WTC11 (cell line): ENCODE measurements at regions of chr18 and their contacts with region 1.

Region 1: DNA sequence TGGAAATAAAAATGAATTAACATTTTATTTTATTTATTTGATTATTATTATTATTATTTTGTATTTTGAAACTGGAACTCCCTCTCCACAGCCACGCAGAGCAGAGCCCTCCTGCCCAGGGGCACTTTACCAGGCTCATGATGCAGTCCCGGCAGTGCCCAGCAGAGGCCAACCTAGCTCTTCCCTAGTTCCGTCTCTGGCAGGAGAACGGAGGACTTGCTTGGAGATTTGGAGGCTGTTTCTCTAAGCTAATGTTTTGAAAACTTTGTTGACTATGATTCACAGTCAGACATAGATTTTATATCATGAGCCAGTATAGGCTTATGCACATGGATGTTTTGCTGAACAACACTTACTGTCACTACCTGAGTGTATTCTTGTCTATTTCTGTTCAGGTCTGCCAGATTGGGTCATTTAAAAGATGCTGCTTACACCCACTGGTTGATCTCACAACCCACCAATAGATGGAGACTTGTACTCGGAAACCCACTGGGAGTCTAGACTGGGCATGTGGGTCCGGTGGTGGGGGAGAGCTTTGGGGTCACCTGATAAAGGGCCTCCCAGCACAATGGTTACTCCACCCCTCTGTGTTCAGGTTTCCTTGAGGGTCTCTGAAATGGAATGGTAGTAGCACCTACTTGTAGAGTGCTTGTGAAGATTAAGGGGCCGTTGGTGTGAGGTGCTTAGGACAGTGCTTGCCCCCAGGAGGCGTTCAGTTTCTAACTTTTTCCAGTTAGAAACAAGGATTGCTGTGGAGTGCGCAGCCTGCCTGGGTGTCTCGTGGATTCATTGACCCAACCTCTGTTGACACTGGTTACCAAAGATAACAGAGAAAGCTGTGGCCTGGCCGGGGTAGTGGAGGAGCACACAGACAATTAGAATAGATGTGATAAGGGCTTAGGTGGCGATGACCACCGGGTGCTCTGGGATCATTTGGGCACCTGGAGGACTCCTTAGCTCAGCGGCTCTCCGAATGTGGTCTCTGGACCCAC is 177.3 kb downstream of the HAUS1 start:
- DNase-seq: peak; percentile 84
- ATAC-seq: peak; percentile 83
- H3K4me3 Mint-ChIP-seq: no peak overlapping the region
- H3K27ac Mint-ChIP-seq: no peak overlapping the region
- H3K4me1 Mint-ChIP-seq: peaks cover 30% of the 10 kb centered on the region
- H3K27me3 Mint-ChIP-seq: no peaks in the 10 kb centered on the region; the same call in 1 of the 2 replicates
- CTCF ChIP-seq: peak; percentile 83

Region 2: GRCh38 chr18:46173393-46174341 is 107.8 kb before region 1 on chr18:
- CTCF ChIA-PET with region 1: interaction called, 30 read pairs
- POLR2A ChIA-PET with region 1: no interaction called
- DNase-seq: peak; percentile 97
- ATAC-seq: peak; percentile 85
- H3K4me3 Mint-ChIP-seq: peak overlapping the region; percentile 98
- H3K27ac Mint-ChIP-seq: peak overlapping the region; percentile 98
- H3K4me1 Mint-ChIP-seq: peaks cover 15% of the 10 kb centered on the region
- H3K27me3 Mint-ChIP-seq: no peaks in the 10 kb centered on the region
- CTCF ChIP-seq: peak; percentile 75

Region 3: GRCh38 chr18:46199515-46200147 is 81.8 kb before region 1 on chr18:
- CTCF ChIA-PET with region 1: no interaction called
- POLR2A ChIA-PET with region 1: no interaction called
- DNase-seq: no peak
- ATAC-seq: peak; percentile 47
- H3K4me3 Mint-ChIP-seq: no peak overlapping the region
- H3K27ac Mint-ChIP-seq: peak overlapping the region; percentile 93
- H3K4me1 Mint-ChIP-seq: peaks cover 15% of the 10 kb centered on the region
- H3K27me3 Mint-ChIP-seq: no peaks in the 10 kb centered on the region
- CTCF ChIP-seq: no peak

Region 4: DNA sequence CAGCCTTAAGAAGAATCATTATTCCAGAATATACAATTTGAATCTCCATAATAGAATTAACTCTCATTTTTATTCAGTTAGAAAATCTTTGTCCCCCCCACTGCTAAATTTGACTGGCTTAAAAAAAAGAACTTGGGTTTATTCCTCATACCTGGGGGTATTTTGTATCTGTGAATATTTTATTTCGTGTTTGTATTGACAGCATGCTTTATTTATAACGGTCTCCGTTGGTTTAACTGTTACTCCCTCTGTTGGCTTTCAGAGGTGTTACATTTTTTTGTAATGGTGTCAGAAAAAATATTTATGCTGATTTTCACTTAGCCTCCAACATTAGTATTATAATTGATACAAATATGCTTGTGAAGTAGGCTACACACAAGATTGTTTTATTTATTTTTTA is 68.2 kb before region 1 on chr18:
- CTCF ChIA-PET with region 1: no interaction called
- POLR2A ChIA-PET with region 1: no interaction called
- DNase-seq: no peak
- ATAC-seq: no peak
- H3K4me3 Mint-ChIP-seq: no peak overlapping the region
- H3K27ac Mint-ChIP-seq: no peak overlapping the region
- H3K4me1 Mint-ChIP-seq: peaks cover 4% of the 10 kb centered on the region; the same call in 1 of the 2 replicates
- H3K27me3 Mint-ChIP-seq: no peaks in the 10 kb centered on the region
- CTCF ChIP-seq: 0 out of 2 replicates have a peak, but pooled peaks have one; percentile 32

Region 5: GRCh38 chr18:46338766-46339165 is 57.3 kb after region 1 on chr18:
- CTCF ChIA-PET with region 1: interaction called, 34 read pairs
- POLR2A ChIA-PET with region 1: no interaction called
- DNase-seq: no peak
- ATAC-seq: no peak
- H3K4me3 Mint-ChIP-seq: no peak overlapping the region
- H3K27ac Mint-ChIP-seq: peak overlapping the region; percentile 65
- H3K4me1 Mint-ChIP-seq: peaks cover 64% of the 10 kb centered on the region
- H3K27me3 Mint-ChIP-seq: peaks cover 4% of the 10 kb centered on the region; the same call in 1 of the 2 replicates
- CTCF ChIP-seq: no peak

Region 6: GRCh38 chr18:46369323-46369722 is 87.8 kb after region 1 on chr18:
- CTCF ChIA-PET with region 1: interaction called, 48 read pairs
- POLR2A ChIA-PET with region 1: interaction called, 3 read pairs
- DNase-seq: peak; percentile 36
- ATAC-seq: peak; percentile 89
- H3K4me3 Mint-ChIP-seq: no peak overlapping the region
- H3K27ac Mint-ChIP-seq: no peak overlapping the region
- H3K4me1 Mint-ChIP-seq: peaks cover 9% of the 10 kb centered on the region
- H3K27me3 Mint-ChIP-seq: no peaks in the 10 kb centered on the region; the same call in 1 of the 2 replicates
- CTCF ChIP-seq: no peak

Region 7: GRCh38 chr18:46433121-46433826 is 151.8 kb after region 1 on chr18:
- CTCF ChIA-PET with region 1: interaction called, 11 read pairs
- POLR2A ChIA-PET with region 1: no interaction called
- DNase-seq: peak; percentile 92
- ATAC-seq: peak; percentile 98
- H3K4me3 Mint-ChIP-seq: peak overlapping the region; percentile 49
- H3K27ac Mint-ChIP-seq: no peak overlapping the region
- H3K4me1 Mint-ChIP-seq: peaks cover 32% of the 10 kb centered on the region
- H3K27me3 Mint-ChIP-seq: no peaks in the 10 kb centered on the region
- CTCF ChIP-seq: no peak

Region 8: DNA sequence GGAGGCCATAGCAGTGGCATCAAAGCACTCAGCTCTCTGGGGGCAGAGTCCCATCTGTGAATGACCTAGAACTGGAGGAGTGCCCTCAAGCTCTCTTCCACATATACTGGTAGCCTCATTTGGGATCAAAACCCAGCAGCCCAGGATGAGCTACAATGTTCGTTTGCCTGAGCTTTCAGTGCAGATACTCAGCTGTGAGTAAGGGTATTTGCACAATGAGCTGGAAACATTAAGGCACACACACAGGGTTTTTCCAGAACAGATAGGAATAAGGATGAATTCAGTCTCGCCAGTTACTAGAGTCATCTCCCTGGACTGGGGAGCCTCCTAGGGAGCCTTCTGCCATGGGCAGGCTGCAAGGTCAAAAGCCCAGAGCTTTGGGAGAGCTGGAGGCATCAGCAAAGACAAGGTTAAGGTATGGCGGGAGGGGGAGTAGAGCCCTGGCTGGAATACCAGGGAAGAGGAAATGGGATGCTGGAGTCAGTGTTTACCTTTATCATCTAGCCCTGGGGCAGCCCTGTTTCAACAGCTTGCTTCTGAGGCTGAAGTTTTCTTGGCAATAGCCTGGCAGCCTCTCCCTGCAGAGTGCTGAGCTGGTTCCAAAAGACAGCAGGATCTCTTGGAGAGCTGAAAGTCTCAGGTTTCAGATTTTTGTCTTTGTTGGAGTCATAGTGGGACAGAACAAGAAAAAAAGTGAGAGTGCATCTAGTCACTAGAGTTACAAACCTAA is 187.9 kb after region 1 on chr18:
- CTCF ChIA-PET with region 1: interaction called, 16 read pairs
- POLR2A ChIA-PET with region 1: no interaction called
- DNase-seq: no peak
- ATAC-seq: no peak; the same call in 1 of the 2 replicates
- H3K4me3 Mint-ChIP-seq: no peak overlapping the region
- H3K27ac Mint-ChIP-seq: no peak overlapping the region; the same call in 1 of the 2 replicates
- H3K4me1 Mint-ChIP-seq: peaks cover 41% of the 10 kb centered on the region
- H3K27me3 Mint-ChIP-seq: peaks cover 4% of the 10 kb centered on the region; the same call in 1 of the 2 replicates
- CTCF ChIP-seq: no peak

Region 9: GRCh38 chr18:46555724-46556123 is 274.2 kb after region 1 on chr18:
- CTCF ChIA-PET with region 1: interaction called, 11 read pairs
- POLR2A ChIA-PET with region 1: no interaction called
- DNase-seq: peak; percentile 77
- ATAC-seq: peak; percentile 99
- H3K4me3 Mint-ChIP-seq: no peak overlapping the region
- H3K27ac Mint-ChIP-seq: no peak overlapping the region
- H3K4me1 Mint-ChIP-seq: no peaks in the 10 kb centered on the region
- H3K27me3 Mint-ChIP-seq: no peaks in the 10 kb centered on the region; the same call in 1 of the 2 replicates
- CTCF ChIP-seq: peak; percentile 66

Region 10: DNA sequence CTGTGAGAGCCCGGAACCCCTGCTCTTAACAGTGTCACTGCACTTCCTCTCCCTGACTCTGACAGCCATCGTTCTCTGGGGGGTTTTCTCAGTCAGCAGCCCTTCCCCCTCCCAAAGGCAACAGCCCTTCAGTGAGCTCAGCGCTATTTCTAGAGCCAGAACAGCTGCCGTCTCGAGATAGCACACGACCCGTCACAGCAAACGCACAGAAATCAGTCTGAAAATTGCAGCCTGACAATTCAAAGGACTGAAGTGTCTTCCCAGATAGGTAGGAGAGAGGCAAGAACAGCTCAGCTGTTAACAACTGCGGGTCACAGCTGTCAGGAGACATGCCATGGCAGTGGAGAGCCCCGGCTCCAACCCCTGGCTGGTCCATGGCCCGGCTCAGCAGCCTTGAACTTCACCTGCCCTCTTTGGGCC is 430.0 kb after region 1 on chr18:
- CTCF ChIA-PET with region 1: no interaction called
- POLR2A ChIA-PET with region 1: no interaction called
- DNase-seq: no peak
- ATAC-seq: 0 out of 2 replicates have a peak, but pooled peaks have one; percentile 13
- H3K4me3 Mint-ChIP-seq: no peak overlapping the region
- H3K27ac Mint-ChIP-seq: no peak overlapping the region
- H3K4me1 Mint-ChIP-seq: peaks cover 19% of the 10 kb centered on the region
- H3K27me3 Mint-ChIP-seq: no peaks in the 10 kb centered on the region
- CTCF ChIP-seq: no peak